Activated T-helper 1 cell treated with anti-CD3 and anti-CD28 coated beads, Interleukin-12 subunit alpha, Interleukin-12 subunit beta, Interleukin-2, Interleukin-4 antibody, amounts not matched to agents 30 ng/mL and 10 ng/mL and 1 ng/mL, durations not matched to agents 14 hours and 24 hours and 36 hours (primary cell): ENCODE measurements at regions of chr10 and their contacts with region 1.

Region 1: DNA sequence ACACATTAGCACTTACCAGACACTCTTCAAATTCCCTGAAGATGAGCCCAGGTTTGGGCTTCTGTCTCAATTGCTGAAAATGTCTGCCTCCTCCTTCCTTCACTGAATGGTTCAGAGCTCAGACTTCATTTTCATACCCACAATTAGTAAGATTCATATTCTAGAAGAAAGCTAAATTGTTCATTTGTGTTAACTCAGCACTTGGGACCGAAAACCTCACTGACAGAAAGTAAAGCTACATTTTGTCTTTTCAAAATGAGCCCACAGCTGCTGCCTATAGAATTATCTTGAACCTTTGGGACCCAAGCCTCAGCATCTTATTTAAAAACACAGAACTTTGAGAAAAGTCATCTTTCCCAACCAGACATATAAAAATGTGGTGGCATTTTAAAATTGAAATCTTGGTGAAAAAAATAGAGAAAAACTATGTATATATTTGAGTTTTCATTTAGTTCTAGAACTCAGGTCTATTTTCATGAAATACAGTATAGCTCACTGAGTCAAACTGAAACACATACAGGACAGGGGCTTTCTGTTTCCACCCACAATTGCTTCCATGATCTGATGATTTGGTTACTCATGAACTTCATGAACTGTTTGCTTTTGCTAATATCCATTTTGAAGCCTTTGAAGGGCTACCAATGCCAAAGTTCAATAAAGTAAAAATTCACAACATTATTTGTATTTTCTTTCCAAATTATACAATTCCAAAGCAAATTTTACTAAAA is 119.1 kb upstream of the PFKP start:
- DNase-seq: no peak
- H3K4me3 Mint-ChIP-seq: peak overlapping the region; percentile 5
- H3K27ac Mint-ChIP-seq: peak overlapping the region; percentile 63
- H3K4me1 Mint-ChIP-seq: peaks cover 39% of the 10 kb centered on the region
- H3K27me3 Mint-ChIP-seq: peaks cover 16% of the 10 kb centered on the region

Region 2: DNA sequence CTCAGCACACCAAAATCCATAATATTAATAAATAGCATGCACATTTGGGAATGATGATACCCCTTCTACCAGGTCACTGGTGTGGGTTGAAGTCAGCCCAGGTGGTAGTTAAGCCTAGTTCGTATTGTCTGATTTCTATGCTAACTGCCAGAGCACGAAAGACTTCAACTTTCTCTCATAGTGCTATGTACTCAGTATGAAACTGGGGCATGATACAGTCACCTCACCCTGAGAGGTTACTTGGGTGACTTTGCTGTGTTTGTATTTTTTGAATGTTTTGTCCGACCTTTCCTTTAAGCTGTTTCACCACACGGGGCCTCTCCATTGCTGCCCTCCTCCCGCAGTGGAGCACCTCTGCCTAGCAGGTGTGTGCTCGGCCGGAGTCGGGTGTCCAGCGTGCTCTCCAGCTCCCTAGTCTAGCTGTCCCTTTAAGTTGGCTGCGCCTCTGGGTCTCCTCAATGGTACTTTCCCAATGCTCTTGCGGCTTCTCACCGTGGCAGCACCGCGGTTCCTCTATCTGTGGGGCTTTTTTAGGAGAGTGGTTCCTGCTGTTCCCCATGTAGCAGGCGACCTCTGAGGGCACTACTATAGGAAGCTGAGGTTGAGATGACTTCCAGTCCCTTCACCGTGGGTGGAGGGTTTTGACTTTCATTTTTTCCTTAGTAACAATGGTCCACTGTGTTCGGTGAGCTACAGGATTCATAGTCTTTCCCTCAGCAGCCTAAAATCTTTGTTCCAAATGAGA is 405.0 kb before region 1 on chr10:
- intact Hi-C with region 1: no loop called
- DNase-seq: no peak
- H3K4me3 Mint-ChIP-seq: no peak overlapping the region
- H3K27ac Mint-ChIP-seq: no peak overlapping the region
- H3K4me1 Mint-ChIP-seq: no peaks in the 10 kb centered on the region
- H3K27me3 Mint-ChIP-seq: no peaks in the 10 kb centered on the region

Region 3: GRCh38 chr10:2893161-2893845 is 55.0 kb before region 1 on chr10:
- intact Hi-C with region 1: no loop called
- DNase-seq: no peak
- H3K4me3 Mint-ChIP-seq: no peak overlapping the region
- H3K27ac Mint-ChIP-seq: no peak overlapping the region
- H3K4me1 Mint-ChIP-seq: no peaks in the 10 kb centered on the region
- H3K27me3 Mint-ChIP-seq: peaks cover 11% of the 10 kb centered on the region

Region 4: GRCh38 chr10:2927958-2928840 is 20.1 kb before region 1 on chr10:
- intact Hi-C with region 1: loop called (anchors 1 kb)
- DNase-seq: peak; percentile 46
- H3K4me3 Mint-ChIP-seq: no peak overlapping the region
- H3K27ac Mint-ChIP-seq: peak overlapping the region; percentile 37
- H3K4me1 Mint-ChIP-seq: peaks cover 8% of the 10 kb centered on the region
- H3K27me3 Mint-ChIP-seq: peaks cover 15% of the 10 kb centered on the region